Sigmoid colon (tissue), 7 donors: ENCODE measurements at regions of chr3 and their contacts with region 1.

Region 1: DNA sequence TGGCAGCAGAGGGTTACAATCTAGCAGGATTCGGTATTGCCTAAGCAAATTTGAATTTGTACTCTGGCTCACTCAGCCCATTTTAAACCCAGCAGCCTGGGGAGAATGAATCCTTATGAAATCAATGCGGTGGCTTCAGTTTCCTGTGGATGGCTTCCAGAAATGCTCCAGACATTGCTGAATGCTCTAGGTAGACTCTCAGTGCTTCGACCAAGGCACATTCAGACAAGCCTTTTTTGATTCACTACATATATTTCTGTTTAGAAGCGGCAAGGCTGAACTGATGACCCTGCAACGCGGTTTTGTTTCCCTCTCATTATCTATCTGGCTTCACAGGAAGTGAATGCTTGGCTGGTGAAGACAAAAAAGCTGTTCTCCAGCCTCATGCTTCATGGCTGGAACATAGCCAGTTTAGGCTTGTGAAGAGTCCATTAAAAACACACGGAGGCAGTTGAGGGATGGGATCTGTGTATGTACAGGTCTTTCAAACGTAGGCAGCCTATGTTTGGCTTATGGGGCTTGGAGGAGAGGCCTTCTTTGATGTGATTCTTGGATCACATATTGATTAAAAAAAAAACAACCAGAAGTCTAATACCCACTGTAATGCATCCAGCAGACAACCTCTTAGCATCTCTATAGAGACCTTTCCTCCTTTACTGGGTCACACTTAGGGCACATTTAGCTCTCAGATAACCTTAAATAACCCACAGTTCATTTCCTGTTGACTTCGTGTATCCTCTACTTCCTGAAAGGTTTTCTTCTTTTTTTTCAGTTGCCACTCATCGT is 400.2 kb upstream of the TBL1XR1 start:
- DNase-seq: peak; percentile 84
- H3K4me3 ChIP-seq: peak overlapping the region in 2 of 4 donors; percentile 0 to 7
- H3K27ac ChIP-seq: peak overlapping the region; percentile 69 to 84 (median 79)
- H3K4me1 ChIP-seq: peaks cover 0 to 68% (median 55%) of the 10 kb centered on the region in 4 donors
- H3K27me3 ChIP-seq: no peaks in the 10 kb centered on the region
- CTCF ChIP-seq: no peak
- EP300 ChIP-seq: peak in 1 of 4 donors; percentile 26
- POLR2A ChIP-seq: no peak

Region 2: GRCh38 chr3:177448987-177449975 is 148.2 kb before region 1 on chr3:
- intact Hi-C with region 1: loop called (anchors 5 kb)
- DNase-seq: no peak
- H3K4me3 ChIP-seq: no peak overlapping the region
- H3K27ac ChIP-seq: peak overlapping the region; percentile 69 to 88 (median 76)
- H3K4me1 ChIP-seq: peaks cover 2 to 73% (median 61%) of the 10 kb centered on the region in 4 donors
- H3K27me3 ChIP-seq: no peaks in the 10 kb centered on the region
- CTCF ChIP-seq: no peak
- EP300 ChIP-seq: no peak
- POLR2A ChIP-seq: no peak

Region 3: DNA sequence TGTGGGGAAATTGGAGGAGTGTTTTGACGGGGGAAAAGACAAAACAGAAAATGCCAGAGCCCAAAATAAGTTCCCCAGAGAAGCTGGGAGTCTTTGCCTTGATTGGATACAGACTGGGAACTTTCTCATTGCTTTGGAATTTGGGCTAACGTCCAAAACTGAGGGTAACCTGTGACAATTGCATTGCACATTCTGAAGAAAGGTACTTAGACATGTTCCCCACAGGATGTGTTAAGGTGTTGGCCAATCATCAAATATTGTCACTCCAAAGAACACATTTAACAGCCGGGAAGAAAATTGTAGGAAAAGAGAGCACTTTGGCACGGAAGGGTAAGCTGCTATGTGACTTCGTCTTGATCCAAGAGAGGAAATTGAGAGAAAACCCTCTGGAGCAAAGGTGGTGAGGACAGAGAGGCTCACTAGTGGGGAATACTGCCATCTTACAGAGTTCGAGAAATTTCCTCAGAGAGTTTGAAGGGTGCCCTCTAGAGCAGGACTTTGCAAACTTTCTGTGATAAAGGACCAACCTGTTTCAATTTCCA is 219.2 kb after region 1 on chr3:
- intact Hi-C with region 1: loop called (anchors 5 kb)
- DNase-seq: no peak
- H3K4me3 ChIP-seq: no peak overlapping the region
- H3K27ac ChIP-seq: peak overlapping the region; percentile 52 to 66 (median 58)
- H3K4me1 ChIP-seq: peaks cover 0 to 53% (median 49%) of the 10 kb centered on the region in 4 donors
- H3K27me3 ChIP-seq: no peaks in the 10 kb centered on the region
- CTCF ChIP-seq: no peak
- EP300 ChIP-seq: no peak
- POLR2A ChIP-seq: no peak

Region 4: GRCh38 chr3:178155521-178155920 is 558.0 kb after region 1 on chr3:
- intact Hi-C with region 1: no loop called
- DNase-seq: no peak
- H3K4me3 ChIP-seq: no peak overlapping the region
- H3K27ac ChIP-seq: no peak overlapping the region
- H3K4me1 ChIP-seq: no peaks in the 10 kb centered on the region
- H3K27me3 ChIP-seq: no peaks in the 10 kb centered on the region
- CTCF ChIP-seq: no peak
- EP300 ChIP-seq: no peak
- POLR2A ChIP-seq: no peak